ENCODE measurements at regions of chr17 and their contacts with region 1.

Region 1: GRCh38 chr17:64506576-64507477 is at the start of gene CEP95:
- DNase-seq: peak; percentile 95
- H3K4me3 Mint-ChIP-seq: peak within 1 kb of the TSS; percentile 98
- H3K27ac Mint-ChIP-seq: peak within 1 kb of the TSS; percentile 100
- H3K4me1 Mint-ChIP-seq: peaks cover 41% of the 10 kb centered on the region
- H3K27me3 Mint-ChIP-seq: no peaks in the 10 kb centered on the region
- total RNA-seq, gene CEP95: 44.9 and 45.2 TPM in 2 replicates

Region 2: GRCh38 chr17:63827002-63827771 is 679.6 kb before region 1 on chr17 and contains the starts of genes FTSJ3 and PSMC5:
- intact Hi-C with region 1: loop called (anchors 5 kb)
- DNase-seq: peak; percentile 94
- H3K4me3 Mint-ChIP-seq: peak within 1 kb of the TSS; percentile 94
- H3K27ac Mint-ChIP-seq: peak within 1 kb of the TSS; percentile 99
- H3K4me1 Mint-ChIP-seq: peaks cover 56% of the 10 kb centered on the region
- H3K27me3 Mint-ChIP-seq: no peaks in the 10 kb centered on the region
- total RNA-seq, gene FTSJ3: 75.0 and 80.7 TPM in 2 replicates
- total RNA-seq, gene PSMC5: 185 and 204 TPM in 2 replicates

Region 3: GRCh38 chr17:64547319-64547718 is 40.5 kb after region 1 on chr17:
- intact Hi-C with region 1: no loop called
- DNase-seq: no peak
- H3K4me3 Mint-ChIP-seq: no peak overlapping the region
- H3K27ac Mint-ChIP-seq: no peak overlapping the region
- H3K4me1 Mint-ChIP-seq: no peaks in the 10 kb centered on the region
- H3K27me3 Mint-ChIP-seq: no peaks in the 10 kb centered on the region

Region 4: GRCh38 chr17:64572638-64573154 is 65.9 kb after region 1 on chr17:
- intact Hi-C with region 1: loop called (anchors 2 kb)
- DNase-seq: no peak
- H3K4me3 Mint-ChIP-seq: peak overlapping the region; percentile 42
- H3K27ac Mint-ChIP-seq: peak overlapping the region; percentile 87
- H3K4me1 Mint-ChIP-seq: peaks cover 11% of the 10 kb centered on the region
- H3K27me3 Mint-ChIP-seq: no peaks in the 10 kb centered on the region

Region 5: DNA sequence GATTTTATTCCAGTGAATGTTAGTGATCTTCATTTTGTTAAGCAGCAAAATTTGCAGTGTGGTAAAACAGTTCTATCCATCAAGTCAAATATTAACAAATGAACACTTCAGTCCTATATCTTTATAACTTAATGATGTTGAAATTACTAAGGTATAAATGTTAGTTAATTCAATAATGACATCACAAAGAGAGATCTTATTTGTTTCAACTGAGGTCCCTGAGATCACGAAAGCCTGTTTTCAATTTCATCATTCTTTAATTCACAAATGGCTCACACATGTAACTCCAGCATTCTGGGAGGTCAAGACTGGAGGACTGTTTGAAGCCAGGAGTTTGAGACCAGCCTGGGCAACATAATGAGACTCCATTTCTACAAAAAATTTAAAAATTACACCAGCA is 141.4 kb after region 1 on chr17:
- intact Hi-C with region 1: loop called (anchors 2 kb)
- DNase-seq: no peak
- H3K4me3 Mint-ChIP-seq: no peak overlapping the region
- H3K27ac Mint-ChIP-seq: no peak overlapping the region
- H3K4me1 Mint-ChIP-seq: peaks cover 20% of the 10 kb centered on the region
- H3K27me3 Mint-ChIP-seq: no peaks in the 10 kb centered on the region

Region 6: DNA sequence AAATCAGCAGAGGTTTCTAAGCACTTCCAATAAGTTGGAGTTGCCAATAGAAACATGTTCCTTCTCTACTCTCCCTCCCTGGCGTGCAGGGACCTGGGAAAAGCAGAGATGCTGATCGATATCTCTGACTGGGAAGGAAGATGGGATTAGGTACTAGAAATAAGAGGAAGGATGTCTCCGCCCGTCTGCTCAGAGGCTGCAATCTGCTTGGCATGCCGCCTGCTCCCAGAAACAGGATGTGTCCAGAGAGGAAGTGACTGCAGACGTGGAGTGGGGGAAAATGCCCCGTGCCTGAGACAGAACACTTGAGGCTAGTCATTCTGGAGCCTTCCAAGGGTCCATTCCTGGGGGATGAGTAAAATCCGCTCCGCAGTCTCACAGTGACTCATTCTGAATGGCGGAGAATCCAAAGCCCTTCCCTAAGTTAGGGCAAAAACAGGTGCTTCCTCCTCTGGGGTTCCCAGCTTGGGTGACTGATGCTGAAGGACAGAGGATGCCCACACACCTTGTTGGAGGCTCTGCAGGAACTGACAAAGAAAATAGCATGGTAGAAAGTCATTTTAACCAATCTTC is 200.3 kb after region 1 on chr17:
- intact Hi-C with region 1: loop called (anchors 5 kb)
- DNase-seq: no peak
- H3K4me3 Mint-ChIP-seq: no peak overlapping the region
- H3K27ac Mint-ChIP-seq: no peak overlapping the region
- H3K4me1 Mint-ChIP-seq: peaks cover 38% of the 10 kb centered on the region
- H3K27me3 Mint-ChIP-seq: no peaks in the 10 kb centered on the region

Measured in activated T-helper 2 cell treated with anti-CD3 and anti-CD28 coated beads, Interferon-gamma antibody, Interleukin-2, Interleukin-4, amounts not matched to agents 10 μg/mL and 5 μg/mL and 100 μg/mL, durations not matched to agents 14 hours and 24 hours and 36 hours (primary cell).